Activated T-helper 2 cell treated with anti-CD3 and anti-CD28 coated beads, Interferon-gamma antibody, Interleukin-2, Interleukin-4, amounts not matched to agents 10 μg/mL and 5 μg/mL and 100 μg/mL, durations not matched to agents 14 hours and 24 hours and 36 hours (primary cell): ENCODE measurements at regions of chr19 and their contacts with region 1.

Region 1: GRCh38 chr19:12139885-12140547 is at the start of gene ZNF20:
- DNase-seq: peak; percentile 88
- H3K4me3 Mint-ChIP-seq: peak within 1 kb of the TSS; percentile 91
- H3K27ac Mint-ChIP-seq: peak within 1 kb of the TSS; percentile 82
- H3K4me1 Mint-ChIP-seq: peaks cover 24% of the 10 kb centered on the region
- H3K27me3 Mint-ChIP-seq: no peaks in the 10 kb centered on the region
- total RNA-seq, gene ZNF20: 4.1 and 4.3 TPM in 2 replicates

Region 2: GRCh38 chr19:11798391-11799330 is 341.4 kb before region 1 on chr19 and contains the start of gene ZNF491:
- intact Hi-C with region 1: loop called (anchors 1 kb)
- DNase-seq: peak; percentile 80
- H3K4me3 Mint-ChIP-seq: peak within 1 kb of the TSS; percentile 85
- H3K27ac Mint-ChIP-seq: peak within 1 kb of the TSS; percentile 62
- H3K4me1 Mint-ChIP-seq: peaks cover 9% of the 10 kb centered on the region
- H3K27me3 Mint-ChIP-seq: peaks cover 4% of the 10 kb centered on the region
- total RNA-seq, gene ZNF491: 0.67 and 0.82 TPM in 2 replicates

Region 3: GRCh38 chr19:11814029-11814699 is 325.9 kb before region 1 on chr19 and contains the start of gene ZNF440:
- intact Hi-C with region 1: loop called (anchors 5 kb)
- DNase-seq: peak; percentile 85
- H3K4me3 Mint-ChIP-seq: peak within 1 kb of the TSS; percentile 88
- H3K27ac Mint-ChIP-seq: peak within 1 kb of the TSS; percentile 71
- H3K4me1 Mint-ChIP-seq: peaks cover 14% of the 10 kb centered on the region
- H3K27me3 Mint-ChIP-seq: no peaks in the 10 kb centered on the region
- total RNA-seq, gene ZNF440: 10.8 and 11.0 TPM in 2 replicates

Region 4: DNA sequence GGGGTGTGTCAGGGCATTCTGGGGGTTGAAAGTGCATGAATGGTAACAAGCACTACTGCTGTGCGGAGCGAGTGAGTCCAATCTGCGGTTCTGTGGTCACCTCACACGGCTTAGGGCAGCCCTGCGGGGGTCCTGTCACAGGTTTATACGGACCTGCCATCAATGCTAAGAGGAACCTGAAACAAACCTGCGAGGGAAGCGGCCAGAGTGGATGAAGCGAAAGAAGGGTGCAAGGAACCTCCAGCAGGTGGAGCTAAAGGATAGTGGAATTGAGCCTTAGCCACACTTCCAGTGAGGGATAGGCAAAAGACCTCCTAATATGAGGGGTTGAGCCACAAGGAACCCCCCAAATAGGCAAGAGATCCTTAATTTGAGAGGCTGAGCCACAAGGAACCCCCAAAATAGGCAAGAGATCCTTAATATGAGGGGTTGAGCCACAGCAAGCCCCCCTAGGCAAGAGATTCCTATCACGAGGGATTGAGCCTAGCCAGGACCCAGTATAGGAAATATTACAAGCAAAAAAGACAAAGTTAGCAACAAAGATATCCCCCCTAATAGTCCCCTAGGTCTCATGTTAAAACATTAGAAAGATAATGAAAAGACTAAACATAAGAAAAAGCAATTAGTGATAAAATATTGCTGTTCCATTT is 258.7 kb before region 1 on chr19:
- intact Hi-C with region 1: loop called (anchors 2 kb)
- DNase-seq: peak; percentile 48
- H3K4me3 Mint-ChIP-seq: no peak overlapping the region
- H3K27ac Mint-ChIP-seq: no peak overlapping the region
- H3K4me1 Mint-ChIP-seq: peaks cover 1% of the 10 kb centered on the region
- H3K27me3 Mint-ChIP-seq: peaks cover 3% of the 10 kb centered on the region

Region 5: GRCh38 chr19:11924886-11925650 is 214.9 kb before region 1 on chr19 and contains the start of gene ZNF700:
- intact Hi-C with region 1: loop called (anchors 1 kb)
- DNase-seq: peak; percentile 91
- H3K4me3 Mint-ChIP-seq: peak within 1 kb of the TSS; percentile 95
- H3K27ac Mint-ChIP-seq: peak within 1 kb of the TSS; percentile 98
- H3K4me1 Mint-ChIP-seq: peaks cover 23% of the 10 kb centered on the region
- H3K27me3 Mint-ChIP-seq: peaks cover 2% of the 10 kb centered on the region
- total RNA-seq, gene ZNF700: 14.5 and 14.6 TPM in 2 replicates

Region 6: GRCh38 chr19:12090807-12091206 is 49.2 kb before region 1 on chr19:
- intact Hi-C with region 1: loop called (anchors 1 kb)
- DNase-seq: peak; percentile 41
- H3K4me3 Mint-ChIP-seq: peak overlapping the region; percentile 53
- H3K27ac Mint-ChIP-seq: peak overlapping the region; percentile 24
- H3K4me1 Mint-ChIP-seq: peaks cover 9% of the 10 kb centered on the region
- H3K27me3 Mint-ChIP-seq: no peaks in the 10 kb centered on the region

Region 7: GRCh38 chr19:12162882-12163806 is 23.1 kb after region 1 on chr19 and contains the start of gene ZNF136:
- intact Hi-C with region 1: loop called (anchors 2 kb)
- DNase-seq: peak; percentile 93
- H3K4me3 Mint-ChIP-seq: peak within 1 kb of the TSS; percentile 100
- H3K27ac Mint-ChIP-seq: peak within 1 kb of the TSS; percentile 94
- H3K4me1 Mint-ChIP-seq: peaks cover 24% of the 10 kb centered on the region
- H3K27me3 Mint-ChIP-seq: no peaks in the 10 kb centered on the region
- total RNA-seq, gene ZNF136: 7.7 and 9.7 TPM in 2 replicates

Region 8: DNA sequence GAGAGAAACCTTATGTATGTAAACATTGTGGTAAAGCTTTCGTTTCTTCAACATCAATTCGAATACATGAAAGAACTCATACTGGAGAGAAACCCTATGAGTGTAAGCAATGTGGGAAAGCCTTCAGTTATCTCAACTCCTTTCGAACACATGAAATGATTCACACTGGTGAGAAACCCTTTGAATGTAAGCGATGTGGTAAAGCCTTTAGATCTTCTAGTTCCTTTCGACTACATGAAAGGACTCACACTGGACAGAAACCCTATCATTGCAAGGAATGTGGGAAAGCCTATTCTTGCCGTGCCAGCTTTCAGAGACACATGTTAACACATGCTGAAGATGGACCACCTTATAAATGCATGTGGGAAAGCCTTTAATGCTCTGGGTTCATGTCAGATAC is 47.6 kb after region 1 on chr19:
- intact Hi-C with region 1: no loop called
- DNase-seq: no peak
- H3K4me3 Mint-ChIP-seq: no peak overlapping the region
- H3K27ac Mint-ChIP-seq: no peak overlapping the region
- H3K4me1 Mint-ChIP-seq: no peaks in the 10 kb centered on the region
- H3K27me3 Mint-ChIP-seq: no peaks in the 10 kb centered on the region